ENCODE measurements at regions of chr3 and their contacts with region 1.

Region 1: DNA sequence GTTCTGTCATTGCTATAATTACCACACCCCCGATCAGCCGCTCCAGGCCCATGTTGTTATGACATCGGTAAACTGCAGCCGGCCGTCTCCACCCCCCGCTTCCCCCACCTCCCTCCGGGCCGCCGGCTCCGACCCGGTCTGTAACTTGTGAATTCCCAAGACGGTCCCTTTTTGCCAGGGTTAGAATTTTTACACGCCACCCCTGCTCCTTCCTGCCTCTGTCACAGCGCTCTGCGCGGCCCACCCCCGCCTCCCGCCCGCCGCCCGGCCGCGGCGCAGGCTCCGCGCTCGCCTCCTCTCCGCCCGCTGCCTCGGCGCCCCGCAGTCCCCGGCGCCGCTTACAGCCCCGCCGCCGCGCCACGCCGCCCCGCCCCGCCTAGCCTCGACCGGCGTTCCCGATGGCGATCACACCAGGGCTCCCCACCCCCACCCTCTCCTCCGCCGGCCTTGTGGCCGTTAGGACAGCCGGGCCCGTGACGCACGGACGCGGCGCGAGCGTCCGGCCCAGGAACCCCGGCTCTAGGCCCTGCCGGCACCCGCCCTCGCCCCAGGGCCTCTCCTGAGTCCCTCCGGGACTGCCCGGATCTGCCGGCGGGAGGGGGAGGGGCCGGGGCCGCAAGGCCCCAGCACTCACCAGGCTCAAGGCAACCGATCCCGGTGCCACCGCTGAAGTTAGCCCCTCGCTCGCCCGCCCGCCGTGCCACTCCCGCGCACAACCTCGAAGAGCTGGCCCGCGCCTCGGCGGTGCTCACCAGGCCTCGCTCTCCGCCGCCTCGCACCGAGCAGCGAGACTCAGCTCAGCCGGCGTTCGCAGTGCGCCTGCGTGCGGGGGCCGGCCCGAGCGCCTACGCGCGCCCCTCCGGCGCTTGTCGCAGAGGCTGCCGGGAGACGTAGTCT is at the start of gene KPNA1:
- DNase-seq: peak; percentile 92
- H3K4me3 ChIP-seq: peak within 1 kb of the TSS; percentile 69 to 89 (median 80)
- H3K27ac ChIP-seq: peak within 1 kb of the TSS; percentile 93 to 98 (median 96)
- H3K4me1 ChIP-seq: peaks cover 0 to 37% (median 33%) of the 10 kb centered on the region in 4 donors
- H3K27me3 ChIP-seq: no peaks in the 10 kb centered on the region
- CTCF ChIP-seq: no peak
- EP300 ChIP-seq: no peak
- POLR2A ChIP-seq: peak; percentile 91 to 95
- total RNA-seq, gene KPNA1: 34.9 to 50.1 (median 40.3) TPM

Region 2: DNA sequence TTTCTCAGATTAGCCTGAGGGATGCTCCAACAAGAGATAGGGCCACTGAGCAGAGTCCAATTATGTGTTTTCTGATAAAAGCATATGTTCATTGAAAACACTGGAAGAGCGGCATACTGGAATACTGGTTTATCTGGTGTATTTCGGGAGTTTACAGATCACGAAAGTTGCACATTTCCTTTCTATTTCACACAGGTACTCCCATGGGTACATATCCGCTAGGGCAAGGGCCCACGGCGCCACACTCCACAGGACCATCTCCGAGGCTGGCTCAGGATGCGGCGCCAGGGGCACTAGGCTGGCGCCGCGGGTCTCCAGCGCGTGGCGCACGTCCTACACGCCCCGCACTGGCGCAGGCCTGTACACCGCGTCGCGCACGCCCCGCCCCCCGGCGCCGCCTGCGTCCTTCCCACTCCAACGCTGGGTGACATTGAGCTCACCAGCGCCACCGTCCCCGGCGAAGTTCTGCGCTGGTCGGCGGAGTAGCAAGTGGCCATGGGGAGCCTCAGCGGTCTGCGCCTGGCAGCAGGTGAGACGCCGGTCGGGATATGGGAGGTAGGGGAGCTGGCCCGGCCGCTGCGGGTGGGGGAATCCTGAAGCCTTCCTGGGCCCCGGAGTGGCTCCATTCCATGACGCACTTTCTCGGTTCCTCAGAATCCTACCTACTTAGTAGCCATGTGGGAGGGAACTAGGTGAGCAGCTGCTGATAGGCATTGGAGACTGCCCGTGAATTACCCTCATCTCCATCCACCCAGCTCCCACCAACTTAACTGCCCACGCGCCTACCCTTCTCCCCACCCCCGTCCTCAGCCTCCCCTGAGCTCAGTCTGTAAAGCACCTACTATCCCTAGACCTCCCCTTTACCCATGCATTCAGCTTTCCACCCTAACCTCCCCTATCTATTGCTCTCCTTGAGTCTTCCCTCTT is 130.3 kb before region 1 on chr3 and contains the start of gene FAM162A:
- intact Hi-C with region 1: loop called (anchors 5 kb)
- DNase-seq: peak; percentile 94
- H3K4me3 ChIP-seq: peak within 1 kb of the TSS; percentile 56 to 76 (median 72)
- H3K27ac ChIP-seq: peak within 1 kb of the TSS; percentile 90 to 93 (median 92)
- H3K4me1 ChIP-seq: peaks cover 0 to 31% (median 26%) of the 10 kb centered on the region in 4 donors
- H3K27me3 ChIP-seq: no peaks in the 10 kb centered on the region
- CTCF ChIP-seq: peak; percentile 20 to 37 (median 27)
- EP300 ChIP-seq: no peak
- POLR2A ChIP-seq: peak; percentile 77 to 86
- total RNA-seq, gene FAM162A: 37.1 to 56.6 (median 45.6) TPM

Region 3: DNA sequence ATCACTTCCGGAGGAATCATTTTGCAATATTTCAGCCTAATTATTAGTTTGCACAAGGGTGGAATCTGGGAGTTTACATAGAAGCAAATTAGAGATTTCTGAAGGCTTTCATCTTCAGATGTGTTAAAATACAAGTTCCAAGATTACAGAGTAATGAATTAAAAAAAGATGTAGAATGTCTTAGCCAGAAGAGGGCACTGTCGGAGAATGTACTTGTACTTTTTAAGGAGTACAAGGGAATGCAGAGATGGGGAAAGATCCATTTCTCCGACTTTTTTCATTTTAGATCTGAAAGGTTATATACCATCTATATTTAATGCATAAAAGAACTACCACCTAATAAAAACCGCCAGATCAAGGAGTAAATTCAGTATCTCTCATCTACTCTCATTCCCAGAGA is 55.4 kb before region 1 on chr3:
- intact Hi-C with region 1: loop called (anchors 5 kb)
- DNase-seq: no peak
- H3K4me3 ChIP-seq: no peak overlapping the region
- H3K27ac ChIP-seq: peak overlapping the region in 1 of 4 donors; percentile 11
- H3K4me1 ChIP-seq: no peaks in the 10 kb centered on the region
- H3K27me3 ChIP-seq: no peaks in the 10 kb centered on the region
- CTCF ChIP-seq: peak in 1 of 4 experiments; percentile 18
- EP300 ChIP-seq: no peak
- POLR2A ChIP-seq: no peak

Region 4: GRCh38 chr3:122564155-122564912 is 50.0 kb after region 1 on chr3 and contains the starts of genes DTX3L and PARP9:
- intact Hi-C with region 1: loop called (anchors 5 kb)
- DNase-seq: peak; percentile 93
- H3K4me3 ChIP-seq: peak within 1 kb of the TSS; percentile 69 to 81 (median 74)
- H3K27ac ChIP-seq: peak within 1 kb of the TSS; percentile 90 to 95 (median 92)
- H3K4me1 ChIP-seq: peaks cover 0 to 65% (median 45%) of the 10 kb centered on the region in 4 donors
- H3K27me3 ChIP-seq: no peaks in the 10 kb centered on the region
- CTCF ChIP-seq: no peak
- EP300 ChIP-seq: no peak
- POLR2A ChIP-seq: peak; percentile 52 to 62
- total RNA-seq, gene DTX3L: 18.9 to 32.6 (median 25.0) TPM
- total RNA-seq, gene PARP9: 24.5 to 43.0 (median 35.3) TPM